Natural killer cell (primary cell): ENCODE measurements at regions of chr20 and their contacts with region 1.

Region 1: GRCh38 chr20:4720041-4720976 is 1.4 kb upstream of the PRND start:
- DNase-seq: peak; percentile 67 to 88
- ATAC-seq: peak; percentile 88 to 98 (median 96)
- H3K4me3 ChIP-seq: no peak overlapping the region
- H3K4me3 Mint-ChIP-seq: no peak overlapping the region
- H3K27ac ChIP-seq: peak overlapping the region; percentile 63
- H3K27ac Mint-ChIP-seq: peak overlapping the region in 1 of 2 donors; percentile 74
- H3K4me1 ChIP-seq: peaks cover 11% of the 10 kb centered on the region
- H3K4me1 Mint-ChIP-seq: peaks cover 11 to 14% of the 10 kb centered on the region in 2 donors
- H3K27me3 ChIP-seq: no peaks in the 10 kb centered on the region
- H3K27me3 Mint-ChIP-seq: no peaks in the 10 kb centered on the region
- CTCF ChIP-seq: peak; percentile 77

Region 2: GRCh38 chr20:4607287-4607713 is 113.0 kb before region 1 on chr20:
- intact Hi-C with region 1: loop called (anchors 1 kb)
- DNase-seq: peak; percentile 36 to 80
- ATAC-seq: peak; percentile 80 to 89 (median 88)
- H3K4me3 ChIP-seq: no peak overlapping the region
- H3K4me3 Mint-ChIP-seq: no peak overlapping the region
- H3K27ac ChIP-seq: no peak overlapping the region
- H3K27ac Mint-ChIP-seq: no peak overlapping the region
- H3K4me1 ChIP-seq: peaks cover 4% of the 10 kb centered on the region
- H3K4me1 Mint-ChIP-seq: peaks cover 5% of the 10 kb centered on the region in 2 donors
- H3K27me3 ChIP-seq: no peaks in the 10 kb centered on the region
- H3K27me3 Mint-ChIP-seq: peaks cover 5 to 29% of the 10 kb centered on the region in 2 donors
- CTCF ChIP-seq: peak; percentile 95

Region 3: GRCh38 chr20:4613718-4614620 is 106.3 kb before region 1 on chr20:
- intact Hi-C with region 1: loop called (anchors 1 kb)
- DNase-seq: peak; percentile 60 to 72
- ATAC-seq: peak; percentile 69 to 95 (median 86)
- H3K4me3 ChIP-seq: no peak overlapping the region
- H3K4me3 Mint-ChIP-seq: peak overlapping the region; percentile 40
- H3K27ac ChIP-seq: no peak overlapping the region
- H3K27ac Mint-ChIP-seq: no peak overlapping the region
- H3K4me1 ChIP-seq: no peaks in the 10 kb centered on the region
- H3K4me1 Mint-ChIP-seq: peaks cover 0 to 9% of the 10 kb centered on the region in 2 donors
- H3K27me3 ChIP-seq: no peaks in the 10 kb centered on the region
- H3K27me3 Mint-ChIP-seq: peaks cover 0 to 5% of the 10 kb centered on the region in 2 donors
- CTCF ChIP-seq: peak; percentile 62

Region 4: GRCh38 chr20:4681991-4682401 is 38.3 kb before region 1 on chr20:
- intact Hi-C with region 1: no loop called
- DNase-seq: no peak
- ATAC-seq: no peak
- H3K4me3 ChIP-seq: no peak overlapping the region
- H3K4me3 Mint-ChIP-seq: no peak overlapping the region
- H3K27ac ChIP-seq: no peak overlapping the region
- H3K27ac Mint-ChIP-seq: peak overlapping the region; percentile 94 to 95
- H3K4me1 ChIP-seq: peaks cover 33% of the 10 kb centered on the region
- H3K4me1 Mint-ChIP-seq: peaks cover 31 to 36% of the 10 kb centered on the region in 2 donors
- H3K27me3 ChIP-seq: no peaks in the 10 kb centered on the region
- H3K27me3 Mint-ChIP-seq: peaks cover 3 to 7% of the 10 kb centered on the region in 2 donors
- CTCF ChIP-seq: no peak

Region 5: GRCh38 chr20:4748847-4749246 is 28.5 kb after region 1 on chr20:
- intact Hi-C with region 1: no loop called
- DNase-seq: no peak
- ATAC-seq: no peak
- H3K4me3 ChIP-seq: no peak overlapping the region
- H3K4me3 Mint-ChIP-seq: no peak overlapping the region
- H3K27ac ChIP-seq: no peak overlapping the region
- H3K27ac Mint-ChIP-seq: no peak overlapping the region
- H3K4me1 ChIP-seq: no peaks in the 10 kb centered on the region
- H3K4me1 Mint-ChIP-seq: no peaks in the 10 kb centered on the region
- H3K27me3 ChIP-seq: no peaks in the 10 kb centered on the region
- H3K27me3 Mint-ChIP-seq: peaks cover 7 to 16% of the 10 kb centered on the region in 2 donors
- CTCF ChIP-seq: no peak